AG04450 (cell line): ENCODE measurements at regions of chr3 and their contacts with region 1.

Region 1: DNA sequence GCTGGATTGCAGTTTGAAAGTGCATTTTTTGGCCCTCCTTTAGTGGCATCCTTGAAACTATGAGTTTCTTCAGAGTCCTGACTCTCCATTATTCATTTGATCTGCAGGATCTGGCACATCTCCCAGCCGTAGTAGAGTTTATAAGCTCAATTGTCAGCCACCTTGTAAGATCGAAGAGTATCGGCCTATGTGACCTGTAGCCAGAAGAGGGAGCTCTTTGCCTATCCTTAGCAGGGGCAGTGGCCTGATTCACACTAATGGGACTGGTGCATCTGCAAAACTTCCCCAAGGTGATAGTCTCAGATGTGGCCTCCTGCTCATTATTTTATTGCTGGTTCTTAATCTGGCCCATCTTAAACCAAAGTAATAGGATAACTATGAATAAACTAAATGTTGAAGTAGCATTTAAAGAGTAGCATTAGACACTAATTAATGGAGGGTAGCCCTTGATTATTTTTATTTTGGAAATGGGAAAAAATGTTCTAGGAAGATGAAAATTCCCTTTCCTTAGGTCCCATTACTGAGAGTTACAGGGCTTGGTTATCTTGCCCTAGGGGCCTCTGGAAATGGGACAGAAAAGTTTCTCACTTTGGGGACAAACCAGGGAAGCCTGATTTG is 21.2 kb downstream of the GCSAM start:
- DNase-seq: peak; percentile 32
- H3K4me3 ChIP-seq: no peak overlapping the region
- H3K27ac ChIP-seq: no peak overlapping the region
- H3K27me3 ChIP-seq: no peaks in the 10 kb centered on the region
- CTCF ChIP-seq: peak; percentile 85

Region 2: DNA sequence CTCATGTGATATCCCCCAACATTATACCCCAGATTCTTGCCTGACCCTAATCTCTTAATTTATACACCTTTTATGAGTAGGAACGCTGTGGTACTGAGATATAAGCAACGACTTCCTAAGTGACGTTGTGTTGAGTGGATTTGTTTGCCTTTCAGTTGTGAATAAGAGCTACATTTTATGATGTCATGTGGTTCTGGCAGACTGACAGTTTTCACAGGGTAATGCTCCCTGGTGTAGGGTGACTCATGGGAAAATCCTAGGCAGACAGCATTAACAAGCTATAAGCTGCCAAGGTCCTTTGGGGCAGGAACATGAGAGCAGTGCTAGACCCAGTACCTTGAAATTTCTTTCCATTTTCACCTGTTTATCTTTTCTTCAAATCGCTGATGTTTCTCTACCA is 14.5 kb before region 1 on chr3:
- CTCF ChIA-PET with region 1: interaction called, 52 read pairs
- POLR2A ChIA-PET with region 1: no interaction called
- DNase-seq: peak; percentile 97
- H3K4me3 ChIP-seq: no peak overlapping the region
- H3K27ac ChIP-seq: no peak overlapping the region
- H3K27me3 ChIP-seq: no peaks in the 10 kb centered on the region
- CTCF ChIP-seq: no peak

Region 3: DNA sequence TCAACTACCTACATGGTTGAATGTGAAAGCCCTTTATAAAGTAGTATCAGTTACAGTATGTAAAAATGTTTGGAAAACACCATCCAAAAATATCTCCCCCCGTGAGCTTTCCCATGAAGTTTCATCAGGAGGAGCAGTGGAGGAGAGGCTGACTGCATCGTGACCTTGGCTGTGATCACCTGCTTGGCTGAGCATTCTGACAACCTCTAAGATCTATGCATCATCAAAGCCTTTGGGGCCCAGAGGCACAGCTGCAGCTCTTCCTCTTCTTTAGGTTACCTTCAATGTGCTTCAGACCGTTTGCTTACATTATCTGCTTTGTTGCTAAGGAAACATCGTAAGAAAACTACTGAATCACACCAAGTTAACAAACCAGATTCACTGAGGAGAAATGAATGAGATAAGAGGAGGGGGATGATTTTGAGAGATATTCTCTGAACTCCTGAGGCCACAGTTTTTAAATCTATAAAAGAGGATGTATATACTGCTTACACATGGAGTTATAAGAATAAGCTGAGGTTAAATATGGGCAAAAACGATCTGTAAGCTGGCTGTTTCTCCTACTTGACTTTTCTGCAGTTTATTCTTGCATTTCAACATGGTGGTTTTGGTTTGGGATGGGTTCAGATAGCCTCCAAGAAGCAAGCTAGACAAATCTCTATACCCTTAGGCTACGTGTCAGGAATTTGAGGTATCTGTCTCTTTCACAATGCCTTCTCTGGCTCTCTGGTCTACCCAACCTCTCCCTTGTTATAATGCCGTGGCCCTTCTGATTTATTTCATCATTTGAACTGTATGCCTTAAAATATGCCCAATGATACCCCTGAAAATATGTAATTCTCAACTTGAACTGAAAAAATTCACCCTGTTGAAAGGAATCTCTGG is 17.2 kb after region 1 on chr3:
- CTCF ChIA-PET with region 1: interaction called, 18 read pairs
- POLR2A ChIA-PET with region 1: no interaction called
- DNase-seq: peak; percentile 16
- H3K4me3 ChIP-seq: no peak overlapping the region
- H3K27ac ChIP-seq: no peak overlapping the region
- H3K27me3 ChIP-seq: no peaks in the 10 kb centered on the region
- CTCF ChIP-seq: no peak

Region 4: DNA sequence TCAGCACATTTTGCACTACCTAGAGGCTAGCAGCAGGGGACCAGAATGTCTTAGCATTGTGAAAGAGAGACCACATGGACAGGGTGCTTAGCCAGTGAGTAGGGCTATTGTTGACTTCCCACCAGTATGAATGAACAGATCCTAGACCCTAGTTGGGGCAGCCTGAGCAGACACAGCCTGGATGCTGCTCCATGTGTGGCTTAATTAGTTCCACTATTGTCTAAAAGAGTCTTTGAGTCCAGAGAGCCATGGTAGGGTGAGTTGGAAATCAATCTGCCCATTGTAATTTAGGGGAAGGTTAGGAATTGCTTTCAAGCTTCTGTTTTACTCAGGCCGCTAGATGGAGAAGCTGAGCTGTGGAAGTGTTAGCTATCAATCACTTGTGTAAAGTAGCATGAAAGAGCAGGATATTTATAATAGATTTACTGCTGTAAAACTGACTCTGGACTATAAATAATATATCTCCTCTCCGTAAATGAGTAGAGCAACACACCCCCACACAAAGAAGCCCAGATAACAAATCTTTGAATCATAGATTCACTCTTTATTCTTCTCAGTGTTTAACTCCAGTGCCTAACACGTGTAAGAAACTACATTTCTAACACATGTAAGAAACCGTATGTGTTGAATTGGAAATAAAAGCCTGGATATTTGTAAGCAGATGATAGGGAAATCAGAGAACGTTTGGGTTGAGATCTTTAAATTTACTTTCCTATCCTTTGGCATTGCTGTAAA is 25.2 kb after region 1 on chr3:
- CTCF ChIA-PET with region 1: interaction called, 14 read pairs
- POLR2A ChIA-PET with region 1: no interaction called
- DNase-seq: no peak
- H3K4me3 ChIP-seq: no peak overlapping the region
- H3K27ac ChIP-seq: no peak overlapping the region
- H3K27me3 ChIP-seq: no peaks in the 10 kb centered on the region
- CTCF ChIP-seq: peak; percentile 71

Region 5: GRCh38 chr3:112321867-112322649 is 210.2 kb after region 1 on chr3:
- CTCF ChIA-PET with region 1: interaction called, 10 read pairs
- POLR2A ChIA-PET with region 1: no interaction called
- DNase-seq: no peak
- H3K4me3 ChIP-seq: no peak overlapping the region
- H3K27ac ChIP-seq: no peak overlapping the region
- H3K27me3 ChIP-seq: peaks cover 4% of the 10 kb centered on the region
- CTCF ChIP-seq: no peak

Region 6: DNA sequence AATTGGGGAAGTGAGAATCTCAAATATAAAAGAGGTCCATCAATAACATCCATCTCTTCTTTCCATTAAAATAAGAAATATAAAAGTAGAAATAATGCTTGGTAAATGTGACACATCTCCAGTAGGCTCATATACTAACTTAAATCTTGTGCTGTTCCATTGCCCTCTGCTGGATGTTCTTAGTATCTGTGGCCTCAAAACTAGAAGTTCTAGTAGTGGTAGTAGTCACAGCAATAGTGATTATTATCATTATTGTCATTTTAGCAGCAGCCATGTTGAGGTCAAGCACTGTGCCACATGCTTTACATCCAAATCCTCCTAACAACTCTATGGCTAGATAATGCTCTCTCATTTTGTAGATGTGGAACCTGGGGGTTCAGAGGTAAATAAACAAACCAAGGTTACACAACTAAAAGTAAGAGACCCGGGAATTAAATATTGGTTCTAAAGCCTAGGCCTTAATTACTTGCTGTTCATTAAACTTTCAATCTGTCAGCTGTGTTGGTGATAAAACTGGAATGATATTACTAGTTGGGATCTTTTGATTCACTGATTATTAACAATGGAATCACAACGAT is 407.6 kb after region 1 on chr3:
- CTCF ChIA-PET with region 1: interaction called, 23 read pairs
- POLR2A ChIA-PET with region 1: no interaction called
- DNase-seq: peak; percentile 50
- H3K4me3 ChIP-seq: no peak overlapping the region
- H3K27ac ChIP-seq: no peak overlapping the region
- H3K27me3 ChIP-seq: no peaks in the 10 kb centered on the region
- CTCF ChIP-seq: peak; percentile 81

Region 7: GRCh38 chr3:112531358-112531781 is 419.5 kb after region 1 on chr3:
- CTCF ChIA-PET with region 1: interaction called, 19 read pairs
- POLR2A ChIA-PET with region 1: no interaction called
- DNase-seq: peak; percentile 6
- H3K4me3 ChIP-seq: no peak overlapping the region
- H3K27ac ChIP-seq: no peak overlapping the region
- H3K27me3 ChIP-seq: no peaks in the 10 kb centered on the region
- CTCF ChIP-seq: peak; percentile 53